Heart left ventricle (tissue), 16 donors: ENCODE measurements at regions of chr12 and their contacts with region 1.

Region 1: DNA sequence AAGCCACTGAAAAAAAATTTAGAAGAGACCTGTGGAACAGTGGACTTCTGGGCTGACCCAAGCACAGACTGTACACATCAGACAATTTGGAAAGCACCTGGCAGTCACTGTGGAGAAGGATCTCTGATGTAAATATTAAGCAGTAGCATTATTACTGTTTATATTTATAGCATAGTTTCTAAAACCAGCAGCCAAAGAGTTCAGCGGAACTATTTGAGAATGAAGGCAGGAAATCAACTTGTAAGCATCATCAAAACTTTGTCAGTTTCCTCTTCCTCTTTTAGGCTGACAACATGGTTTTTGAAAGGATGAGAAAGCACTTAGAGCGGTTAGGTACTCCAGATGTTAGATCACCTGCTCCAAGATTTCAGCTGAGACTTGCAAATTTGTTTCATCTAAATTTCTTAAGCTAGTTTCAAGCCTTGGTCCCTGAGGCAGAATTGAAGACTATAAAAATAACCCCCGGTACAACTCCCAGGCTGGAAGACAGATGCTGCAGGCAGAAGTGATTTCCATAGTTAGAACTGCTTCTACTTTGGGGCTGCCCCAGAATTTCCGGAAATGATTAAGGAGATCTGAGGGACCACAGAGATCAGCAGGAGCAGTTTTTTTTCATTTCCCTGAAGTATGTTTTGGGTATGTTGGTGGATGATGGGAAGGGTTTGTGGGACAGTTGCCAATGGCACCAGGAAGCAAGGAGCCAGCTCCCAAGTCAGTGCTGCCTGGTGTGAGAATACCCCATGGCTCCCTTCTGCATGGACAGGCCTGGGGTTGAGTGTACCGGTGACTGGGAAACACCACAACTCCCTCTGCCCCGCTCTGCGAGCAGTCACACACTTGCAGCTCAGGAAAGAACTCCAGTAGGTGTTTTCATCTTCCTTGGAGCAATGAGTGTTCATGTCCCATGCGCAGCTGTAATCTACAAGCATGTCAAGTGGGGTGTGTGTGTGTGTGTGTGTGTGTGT is 354.5 kb downstream of the NUAK1 start:
- DNase-seq: peak in 1 of 5 donors; percentile 19
- ATAC-seq: peak in 3 of 4 donors; percentile 14 to 65 (median 54)
- H3K4me3 ChIP-seq: no peak overlapping the region
- H3K27ac ChIP-seq: peak overlapping the region in 3 of 12 donors; percentile 10 to 35 (median 27)
- H3K4me1 ChIP-seq: peaks cover 0 to 15% (median 5%) of the 10 kb centered on the region in 12 donors
- H3K27me3 ChIP-seq: no peaks in the 10 kb centered on the region
- CTCF ChIP-seq: no peak
- POLR2A ChIP-seq: no peak

Region 2: GRCh38 chr12:105713606-105714305 is 70.5 kb before region 1 on chr12:
- intact Hi-C with region 1: no loop called
- DNase-seq: no peak
- ATAC-seq: no peak
- H3K4me3 ChIP-seq: no peak overlapping the region
- H3K27ac ChIP-seq: no peak overlapping the region
- H3K4me1 ChIP-seq: peaks cover 0 to 5% (median 0%) of the 10 kb centered on the region in 12 donors
- H3K27me3 ChIP-seq: no peaks in the 10 kb centered on the region
- CTCF ChIP-seq: no peak
- POLR2A ChIP-seq: no peak

Region 3: DNA sequence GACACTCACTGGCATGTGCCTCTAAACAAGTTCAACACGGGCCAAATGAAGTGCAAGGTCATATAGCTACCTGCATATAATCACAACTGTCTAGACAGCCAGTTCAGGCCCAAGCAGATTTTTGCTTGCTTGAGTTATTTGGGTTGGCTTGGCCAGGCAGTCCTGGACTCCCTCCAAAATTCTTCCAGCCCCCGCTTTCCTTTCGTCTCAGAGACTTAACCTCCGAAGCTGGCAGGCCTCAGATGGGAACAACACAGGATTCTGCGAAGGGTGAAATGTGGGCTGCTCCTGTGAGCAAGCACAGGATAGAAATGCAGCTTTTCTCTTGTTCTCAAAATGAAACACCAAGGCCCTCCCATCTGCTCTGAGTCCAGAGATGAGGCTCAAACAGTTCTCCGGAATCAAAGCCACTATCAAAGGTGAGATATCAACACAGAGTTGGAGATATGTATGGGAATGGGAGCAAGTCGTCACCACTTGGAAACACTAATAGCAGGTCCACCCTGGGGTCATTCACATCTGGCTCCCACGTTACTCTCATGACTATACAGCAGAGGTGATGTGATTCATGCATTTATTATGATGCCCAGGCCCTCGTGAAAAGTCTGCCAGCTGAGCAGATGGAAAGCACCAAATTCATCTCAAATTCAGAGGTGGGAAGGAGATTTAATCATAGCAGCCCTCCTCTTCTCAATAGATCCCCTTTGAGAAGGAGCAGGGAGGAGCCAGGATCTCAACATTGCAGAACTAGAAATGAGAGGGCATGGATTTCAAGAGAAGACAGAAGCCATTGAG is 35.3 kb before region 1 on chr12:
- intact Hi-C with region 1: loop called in 1 of 10 experiments (anchors 2 kb)
- DNase-seq: peak in 4 of 5 donors; percentile 36 to 66 (median 60)
- ATAC-seq: peak in 3 of 4 donors; percentile 71 to 85 (median 84)
- H3K4me3 ChIP-seq: no peak overlapping the region
- H3K27ac ChIP-seq: peak overlapping the region in 5 of 12 donors; percentile 30 to 52 (median 43)
- H3K4me1 ChIP-seq: peaks cover 0 to 19% (median 13%) of the 10 kb centered on the region in 12 donors
- H3K27me3 ChIP-seq: peaks cover 0 to 3% (median 0%) of the 10 kb centered on the region in 9 donors
- CTCF ChIP-seq: no peak
- POLR2A ChIP-seq: no peak

Region 4: DNA sequence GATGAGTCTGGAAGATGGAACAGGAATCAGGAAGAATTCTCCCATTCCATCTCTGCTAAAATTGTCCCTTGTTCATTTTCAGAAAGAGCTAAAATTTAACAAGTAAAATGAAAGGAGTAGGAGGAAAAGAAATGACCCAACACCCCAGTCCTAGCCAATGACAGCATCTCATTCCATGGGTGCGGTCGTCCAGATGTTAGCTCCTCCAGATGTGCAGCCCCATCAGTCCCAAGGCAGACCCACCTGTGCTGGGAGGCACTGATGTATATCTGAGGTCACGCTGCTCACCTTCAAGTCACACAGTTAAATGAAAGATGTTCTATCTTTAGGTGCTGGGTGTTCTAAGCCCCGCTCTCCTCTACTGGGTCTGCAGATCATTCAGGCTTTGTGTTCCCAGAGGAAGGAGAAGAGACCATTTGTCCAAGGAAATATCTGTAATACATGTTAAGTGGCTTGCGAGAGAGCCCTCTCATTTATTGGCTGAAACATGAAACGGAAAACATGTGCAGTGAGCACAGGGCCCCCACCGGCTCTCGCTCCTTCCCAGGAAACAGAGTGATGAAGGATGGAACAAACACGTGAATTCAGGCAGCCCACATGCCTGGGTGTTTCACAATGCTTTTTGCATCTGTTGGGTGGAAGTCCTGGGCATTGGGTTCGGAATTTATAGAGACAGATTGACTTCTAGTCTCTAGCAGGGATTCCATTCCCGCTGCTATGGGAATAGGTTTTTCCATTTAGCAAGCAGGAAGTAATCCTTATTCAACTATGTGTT is 59.9 kb after region 1 on chr12:
- intact Hi-C with region 1: loop called in 1 of 10 experiments (anchors 10 kb)
- DNase-seq: no peak
- ATAC-seq: peak in 1 of 4 donors; percentile 30
- H3K4me3 ChIP-seq: no peak overlapping the region
- H3K27ac ChIP-seq: no peak overlapping the region
- H3K4me1 ChIP-seq: peaks cover 0 to 15% (median 0%) of the 10 kb centered on the region in 12 donors
- H3K27me3 ChIP-seq: no peaks in the 10 kb centered on the region
- CTCF ChIP-seq: no peak
- POLR2A ChIP-seq: no peak

Region 5: GRCh38 chr12:105852951-105853350 is 68.7 kb after region 1 on chr12:
- intact Hi-C with region 1: loop called in 2 of 10 experiments (anchors 10 kb)
- DNase-seq: peak in 3 of 5 donors; percentile 54 to 55 (median 54)
- ATAC-seq: peak; percentile 77 to 95 (median 82)
- H3K4me3 ChIP-seq: peak overlapping the region in 8 of 12 donors; percentile 0 to 35 (median 18)
- H3K27ac ChIP-seq: peak overlapping the region in 9 of 12 donors; percentile 5 to 73 (median 20)
- H3K4me1 ChIP-seq: peaks cover 0 to 28% (median 9%) of the 10 kb centered on the region in 12 donors
- H3K27me3 ChIP-seq: no peaks in the 10 kb centered on the region
- CTCF ChIP-seq: no peak
- POLR2A ChIP-seq: no peak